Activated B cell treated with CpG ODN at 0.5 μM for 24 hours (primary cell): ENCODE measurements at regions of chr12 and their contacts with region 1.

Region 1: DNA sequence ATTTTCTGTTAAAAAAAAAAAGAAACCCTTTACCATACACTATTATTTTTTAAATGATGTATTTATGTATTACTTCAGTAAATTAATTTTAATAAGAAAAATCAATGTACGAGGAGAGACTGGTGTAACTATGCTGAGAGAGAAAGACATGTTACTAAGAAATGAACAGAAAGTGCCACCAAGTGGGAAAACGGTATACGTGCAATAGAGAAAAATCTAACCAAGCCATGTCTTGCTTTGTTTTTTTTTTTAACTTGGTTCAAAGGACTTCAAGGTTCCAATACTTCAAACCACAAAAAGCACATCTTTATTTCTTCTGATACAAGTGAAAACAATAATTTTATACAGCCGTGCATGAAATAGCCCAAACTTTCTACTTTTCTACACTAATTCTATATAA is 22.9 kb downstream of the NDUFA12 start:
- DNase-seq: no peak
- ATAC-seq: no peak
- H3K4me3 Mint-ChIP-seq: no peak overlapping the region
- H3K27ac Mint-ChIP-seq: no peak overlapping the region
- H3K4me1 Mint-ChIP-seq: peaks cover 5% of the 10 kb centered on the region
- H3K27me3 Mint-ChIP-seq: no peaks in the 10 kb centered on the region
- CTCF ChIP-seq: no peak

Region 2: GRCh38 chr12:94710933-94711332 is 269.6 kb before region 1 on chr12:
- CTCF ChIA-PET with region 1: no interaction called
- POLR2A ChIA-PET with region 1: no interaction called
- intact Hi-C with region 1: loop called (anchors 1 kb)
- DNase-seq: no peak
- ATAC-seq: peak; percentile 69
- H3K4me3 Mint-ChIP-seq: no peak overlapping the region
- H3K27ac Mint-ChIP-seq: no peak overlapping the region
- H3K4me1 Mint-ChIP-seq: peaks cover 32% of the 10 kb centered on the region
- H3K27me3 Mint-ChIP-seq: no peaks in the 10 kb centered on the region
- CTCF ChIP-seq: no peak